HCT116 (cell line): ENCODE measurements at regions of chr1 and their contacts with region 1.

Region 1: DNA sequence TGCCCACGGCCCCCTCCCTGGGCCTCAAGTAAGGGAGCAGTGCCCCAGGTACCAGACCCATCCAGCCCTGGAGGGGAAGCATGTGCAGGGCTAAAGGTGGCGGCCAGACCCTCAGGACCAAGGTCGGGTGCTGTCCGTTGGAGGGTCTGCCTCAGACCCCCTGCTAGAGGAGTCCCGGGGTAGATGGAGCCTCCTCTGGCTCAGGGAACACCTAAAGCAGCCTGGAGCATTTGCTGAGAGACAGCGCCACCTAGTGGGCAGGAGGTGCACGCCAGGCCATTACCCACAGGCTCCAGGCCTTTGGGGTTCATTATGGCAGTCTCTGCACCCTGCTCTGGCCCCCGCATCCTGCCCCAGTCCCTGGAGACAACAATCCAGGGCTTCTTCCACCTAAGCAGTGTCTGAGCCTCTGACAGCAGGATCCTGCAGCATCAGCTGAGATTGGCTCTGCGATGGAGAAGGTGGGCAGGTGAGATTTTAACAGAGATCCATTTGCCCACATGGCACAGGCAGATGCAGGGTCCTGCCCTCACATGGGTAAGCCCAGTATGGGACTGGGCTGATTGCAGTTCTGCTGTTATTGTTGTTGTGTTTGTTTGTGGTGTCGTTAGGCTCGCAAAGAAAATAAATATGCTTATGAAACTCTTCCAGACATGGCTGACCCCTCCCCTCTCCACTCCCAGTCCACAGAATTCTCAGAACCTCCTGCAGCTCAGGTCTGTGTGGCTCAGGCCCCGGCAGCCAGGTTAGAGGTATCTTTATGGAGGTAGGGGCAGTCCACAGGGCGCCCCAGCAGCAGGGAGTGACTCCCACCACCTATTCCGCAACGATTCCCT is 42.4 kb downstream of the CTNNBIP1 start:
- DNase-seq: no peak
- ATAC-seq: peak; percentile 97
- H3K4me3 ChIP-seq: no peak overlapping the region
- H3K27ac ChIP-seq: no peak overlapping the region
- H3K4me1 ChIP-seq: peaks cover 0 to under 1% of the 10 kb centered on the region in 2 experiments; a peak in 1 of 4 replicates
- H3K27me3 ChIP-seq: no peaks in the 10 kb centered on the region
- CTCF ChIP-seq: peak; percentile 97 to 98 (median 97)
- POLR2A ChIP-seq: no peak
- RAD21 ChIP-seq: peak; percentile 99

Region 2: DNA sequence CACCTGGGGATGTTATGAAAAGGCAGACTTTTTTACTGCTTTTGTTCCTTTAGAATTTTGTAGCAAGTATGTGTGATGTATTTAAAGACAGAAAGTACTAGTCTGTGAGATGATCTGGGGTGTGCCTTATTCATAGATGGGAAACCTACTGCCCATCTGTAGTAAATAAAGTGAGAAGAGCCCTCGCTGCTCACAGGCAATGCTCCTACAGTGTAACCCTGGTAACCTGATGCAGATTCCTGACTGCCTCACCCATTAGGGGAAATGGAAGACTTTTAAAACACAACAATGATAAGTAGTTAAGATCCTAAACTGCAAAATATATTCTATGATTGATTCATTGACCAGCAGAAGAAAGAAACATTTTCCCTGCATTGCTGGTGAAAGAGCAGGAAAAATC is 298.4 kb before region 1 on chr1:
- CTCF ChIA-PET with region 1: no interaction called
- POLR2A ChIA-PET with region 1: no interaction called
- RAD21 ChIA-PET with region 1: no interaction called
- intact Hi-C with region 1: no loop called
- DNase-seq: no peak
- ATAC-seq: no peak
- H3K4me3 ChIP-seq: no peak overlapping the region
- H3K27ac ChIP-seq: no peak overlapping the region
- H3K4me1 ChIP-seq: no peaks in the 10 kb centered on the region
- H3K27me3 ChIP-seq: no peaks in the 10 kb centered on the region
- CTCF ChIP-seq: no peak
- POLR2A ChIP-seq: no peak
- RAD21 ChIP-seq: no peak

Region 3: GRCh38 chr1:9676815-9677393 is 190.7 kb before region 1 on chr1:
- CTCF ChIA-PET with region 1: no interaction called
- POLR2A ChIA-PET with region 1: no interaction called
- RAD21 ChIA-PET with region 1: no interaction called
- intact Hi-C with region 1: no loop called
- DNase-seq: no peak
- ATAC-seq: no peak
- H3K4me3 ChIP-seq: no peak overlapping the region
- H3K27ac ChIP-seq: no peak overlapping the region
- H3K4me1 ChIP-seq: peaks cover 0 to 6% of the 10 kb centered on the region in 2 experiments; a peak in 2 of 4 replicates
- H3K27me3 ChIP-seq: no peaks in the 10 kb centered on the region
- CTCF ChIP-seq: no peak
- POLR2A ChIP-seq: no peak
- RAD21 ChIP-seq: no peak

Region 4: DNA sequence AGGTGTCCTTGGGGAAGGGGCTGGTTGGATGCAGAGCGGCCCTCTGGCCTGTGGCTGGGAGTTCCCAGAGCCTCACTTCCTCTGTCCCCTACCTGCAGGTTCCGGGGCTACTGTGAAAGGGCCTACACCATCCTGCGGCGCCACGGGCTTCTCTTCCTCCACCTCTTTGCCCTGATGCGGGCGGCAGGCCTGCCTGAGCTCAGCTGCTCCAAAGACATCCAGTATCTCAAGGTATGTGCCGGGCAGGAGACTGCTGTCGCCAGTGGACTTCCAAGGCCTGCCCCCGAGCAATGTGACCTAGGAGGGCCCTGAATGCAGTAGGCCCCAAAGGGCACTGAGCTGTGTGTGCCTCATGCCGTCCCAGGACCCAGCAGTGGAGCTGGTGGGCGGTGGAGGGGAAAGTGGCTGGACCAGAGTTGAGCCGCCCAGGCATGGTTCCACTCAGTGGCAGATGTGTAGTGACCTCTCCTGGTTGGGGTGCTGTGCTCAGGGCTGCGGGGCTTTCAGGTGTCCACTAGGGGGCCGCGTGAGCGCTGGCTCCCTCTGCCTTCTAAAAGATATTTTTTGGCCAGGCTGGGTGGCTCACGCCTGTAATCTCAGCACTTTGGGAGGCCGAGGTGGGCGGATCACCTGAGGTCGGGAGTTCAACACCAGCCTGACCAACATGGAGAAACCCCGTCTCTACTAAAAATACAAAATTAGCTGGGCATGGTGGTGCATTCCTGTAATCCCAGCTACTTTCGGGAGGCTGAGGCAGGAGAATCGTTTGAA is 142.7 kb before region 1 on chr1:
- CTCF ChIA-PET with region 1: interaction called, 6 read pairs
- POLR2A ChIA-PET with region 1: no interaction called
- RAD21 ChIA-PET with region 1: no interaction called
- intact Hi-C with region 1: loop called (anchors 2 kb)
- DNase-seq: peak; percentile 33
- ATAC-seq: peak; percentile 91
- H3K4me3 ChIP-seq: no peak overlapping the region
- H3K27ac ChIP-seq: 0 out of 2 replicates have a peak overlapping the region, but pooled peaks have one; percentile 5
- H3K4me1 ChIP-seq: peaks cover 0 to 6% of the 10 kb centered on the region in 2 experiments; a peak in 1 of 4 replicates
- H3K27me3 ChIP-seq: no peaks in the 10 kb centered on the region
- CTCF ChIP-seq: peak; percentile 84 to 99 (median 98)
- POLR2A ChIP-seq: no peak
- RAD21 ChIP-seq: peak; percentile 87

Region 5: DNA sequence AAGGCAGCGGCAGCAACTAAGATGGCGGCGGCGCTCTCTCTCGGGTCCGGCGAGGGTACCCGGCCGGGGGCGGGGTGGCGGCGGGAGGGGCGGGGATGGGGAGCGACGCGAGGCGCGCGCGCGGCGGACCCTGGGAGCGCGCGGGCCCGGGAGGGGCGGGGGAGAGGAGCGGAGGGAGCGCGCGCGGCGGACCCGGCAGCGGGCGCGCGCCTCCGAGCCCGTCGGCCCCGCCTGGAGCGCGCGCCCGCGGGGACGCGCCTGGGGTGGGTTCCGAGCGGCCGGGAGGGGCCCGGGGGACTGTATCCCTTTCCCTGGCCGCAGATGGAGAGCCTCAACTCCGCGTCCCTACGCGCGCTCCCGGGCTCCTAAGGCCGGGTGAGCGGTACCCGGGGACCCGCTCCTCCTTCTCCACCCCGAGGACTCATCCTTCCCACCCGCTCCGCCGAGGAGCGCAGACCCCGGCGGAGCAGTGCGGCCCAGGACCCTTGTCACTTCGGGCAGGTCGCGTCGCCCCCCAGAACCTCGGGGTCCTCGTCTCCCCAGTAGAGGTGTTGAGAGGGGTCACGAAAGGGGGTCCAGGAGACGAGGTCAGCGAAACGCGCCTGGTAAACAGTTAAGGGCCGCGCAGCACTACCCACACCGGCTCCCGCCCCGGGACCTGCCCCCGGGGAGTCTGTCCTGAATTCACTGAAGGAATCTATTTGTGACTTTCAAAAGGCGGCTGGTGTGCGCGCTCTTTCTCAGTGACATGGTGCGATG is 43.5 kb before region 1 on chr1 and contains the start of gene CLSTN1:
- CTCF ChIA-PET with region 1: no interaction called
- POLR2A ChIA-PET with region 1: no interaction called
- RAD21 ChIA-PET with region 1: no interaction called
- intact Hi-C with region 1: loop called (anchors 5 kb)
- DNase-seq: peak; percentile 61
- ATAC-seq: peak; percentile 66
- H3K4me3 ChIP-seq: peak within 1 kb of the TSS; percentile 93 to 95
- H3K27ac ChIP-seq: peak within 1 kb of the TSS; percentile 86
- H3K4me1 ChIP-seq: peaks cover 21 to 38% of the 10 kb centered on the region in 2 experiments
- H3K27me3 ChIP-seq: no peaks in the 10 kb centered on the region
- CTCF ChIP-seq: no peak
- POLR2A ChIP-seq: no peak
- RAD21 ChIP-seq: no peak
- total RNA-seq, gene CLSTN1: 113 TPM

Region 6: DNA sequence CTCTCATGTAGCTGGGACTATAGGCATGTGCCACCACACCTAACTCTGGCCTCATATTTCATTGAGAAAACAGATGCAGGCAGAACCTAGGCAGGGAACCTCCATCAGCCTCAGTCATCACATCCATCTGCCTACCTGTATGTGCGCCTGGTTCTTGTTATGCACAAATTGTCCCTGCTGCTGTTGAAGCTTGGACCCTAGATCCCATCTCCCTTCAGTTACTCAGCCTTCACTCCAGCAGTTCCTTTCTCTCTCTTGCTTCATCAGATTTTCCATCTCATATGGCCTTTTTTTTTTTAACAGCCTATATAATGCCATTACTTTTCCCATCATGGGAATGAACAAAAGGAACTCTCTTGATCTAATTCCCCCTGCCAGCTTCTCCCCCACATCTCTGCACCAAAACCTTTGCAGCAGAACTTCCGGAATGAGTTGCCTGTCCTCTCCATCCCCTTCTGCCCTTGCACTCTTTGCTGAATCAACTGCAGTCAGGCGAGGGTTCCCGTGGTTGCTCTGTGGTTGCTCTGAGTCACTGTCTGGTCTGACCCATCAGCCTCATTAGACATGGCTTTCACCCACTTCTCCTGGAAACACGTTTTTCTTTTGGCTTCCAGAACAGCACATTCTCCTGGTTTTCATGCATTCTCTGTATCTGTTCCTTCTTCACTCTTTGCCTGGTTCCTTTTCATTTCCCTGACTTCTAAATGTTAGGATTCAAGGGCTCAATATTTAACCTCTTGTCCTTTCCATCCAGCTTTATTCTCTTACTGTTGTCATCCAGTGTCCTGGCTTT is 206.6 kb after region 1 on chr1:
- CTCF ChIA-PET with region 1: no interaction called
- POLR2A ChIA-PET with region 1: no interaction called
- RAD21 ChIA-PET with region 1: no interaction called
- intact Hi-C with region 1: no loop called
- DNase-seq: no peak
- ATAC-seq: peak; percentile 86
- H3K4me3 ChIP-seq: no peak overlapping the region
- H3K27ac ChIP-seq: no peak overlapping the region
- H3K4me1 ChIP-seq: peaks cover 3 to 19% of the 10 kb centered on the region in 2 experiments
- H3K27me3 ChIP-seq: no peaks in the 10 kb centered on the region
- CTCF ChIP-seq: no peak
- POLR2A ChIP-seq: no peak
- RAD21 ChIP-seq: no peak

Region 7: DNA sequence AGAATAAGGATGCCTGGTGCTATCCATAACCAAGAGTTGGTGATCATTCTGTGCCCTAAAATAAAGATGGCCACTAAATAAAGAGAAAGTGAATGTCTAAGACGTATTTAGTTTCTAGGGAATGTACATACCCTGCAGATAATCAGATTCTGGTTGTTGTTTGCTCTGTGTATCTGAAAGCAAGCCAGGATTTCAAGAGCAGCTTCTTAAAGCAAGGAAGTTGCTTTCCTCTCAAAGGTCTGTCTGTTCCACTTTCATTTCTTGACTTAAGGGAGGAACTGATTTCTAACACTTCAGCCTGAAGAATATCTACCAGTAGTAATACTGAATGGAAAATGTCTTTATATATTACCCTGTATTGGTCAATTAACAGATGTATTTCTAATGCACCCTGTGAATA is 431.5 kb after region 1 on chr1:
- CTCF ChIA-PET with region 1: no interaction called
- POLR2A ChIA-PET with region 1: no interaction called
- RAD21 ChIA-PET with region 1: no interaction called
- intact Hi-C with region 1: no loop called
- DNase-seq: no peak
- ATAC-seq: no peak
- H3K4me3 ChIP-seq: no peak overlapping the region
- H3K27ac ChIP-seq: no peak overlapping the region
- H3K4me1 ChIP-seq: no peaks in the 10 kb centered on the region
- H3K27me3 ChIP-seq: no peaks in the 10 kb centered on the region
- CTCF ChIP-seq: no peak
- POLR2A ChIP-seq: no peak
- RAD21 ChIP-seq: no peak